Naive thymus-derived CD4-positive, alpha-beta T cell (primary cell): ENCODE measurements at regions of chr12 and their contacts with region 1.

Region 1: GRCh38 chr12:45990468-45991283 is at the start of gene SCAF11:
- DNase-seq: peak; percentile 100
- ATAC-seq: peak; percentile 92
- H3K4me3 ChIP-seq: peak within 1 kb of the TSS; percentile 94
- H3K4me3 Mint-ChIP-seq: peak within 1 kb of the TSS; percentile 91 to 99 (median 96)
- H3K27ac ChIP-seq: peak within 1 kb of the TSS; percentile 97
- H3K27ac Mint-ChIP-seq: peak within 1 kb of the TSS; percentile 99 to 100 (median 100)
- H3K4me1 ChIP-seq: peaks cover 21 to 35% of the 10 kb centered on the region in 2 donors
- H3K4me1 Mint-ChIP-seq: peaks cover 36 to 53% (median 47%) of the 10 kb centered on the region in 7 donors
- H3K27me3 ChIP-seq: no peaks in the 10 kb centered on the region
- H3K27me3 Mint-ChIP-seq: peaks cover 0 to 15% (median 0%) of the 10 kb centered on the region in 5 donors
- total RNA-seq, gene SCAF11: 144 to 194 (median 165) TPM

Region 2: GRCh38 chr12:45215419-45216229 is 775.1 kb before region 1 on chr12 and contains the start of gene ANO6:
- CTCF ChIA-PET with region 1: no interaction called
- POLR2A ChIA-PET with region 1: no interaction called
- intact Hi-C with region 1: loop called (anchors 2 to 5 kb)
- DNase-seq: peak; percentile 58 to 85 (median 71)
- ATAC-seq: peak; percentile 86
- H3K4me3 ChIP-seq: peak within 1 kb of the TSS; percentile 83
- H3K4me3 Mint-ChIP-seq: peak within 1 kb of the TSS; percentile 90 to 99 (median 97)
- H3K27ac ChIP-seq: peak within 1 kb of the TSS; percentile 69
- H3K27ac Mint-ChIP-seq: peak within 1 kb of the TSS; percentile 83 to 96 (median 95)
- H3K4me1 ChIP-seq: peaks cover 17% of the 10 kb centered on the region in 2 donors
- H3K4me1 Mint-ChIP-seq: peaks cover 26 to 70% (median 59%) of the 10 kb centered on the region in 7 donors
- H3K27me3 ChIP-seq: no peaks in the 10 kb centered on the region
- H3K27me3 Mint-ChIP-seq: no peaks in the 10 kb centered on the region
- total RNA-seq, gene ANO6: 15.1 to 29.7 (median 25.3) TPM

Region 3: GRCh38 chr12:45966486-45966885 is 24.2 kb before region 1 on chr12:
- CTCF ChIA-PET with region 1: no interaction called
- POLR2A ChIA-PET with region 1: no interaction called
- intact Hi-C with region 1: no loop called
- DNase-seq: no peak
- ATAC-seq: no peak
- H3K4me3 ChIP-seq: no peak overlapping the region
- H3K4me3 Mint-ChIP-seq: no peak overlapping the region
- H3K27ac ChIP-seq: no peak overlapping the region
- H3K27ac Mint-ChIP-seq: no peak overlapping the region
- H3K4me1 ChIP-seq: peaks cover 0 to 6% of the 10 kb centered on the region in 2 donors
- H3K4me1 Mint-ChIP-seq: peaks cover 36 to 88% (median 76%) of the 10 kb centered on the region in 7 donors
- H3K27me3 ChIP-seq: no peaks in the 10 kb centered on the region
- H3K27me3 Mint-ChIP-seq: no peaks in the 10 kb centered on the region

Region 4: GRCh38 chr12:46005151-46005797 is 14.6 kb after region 1 on chr12:
- CTCF ChIA-PET with region 1: interaction called, 4 read pairs
- POLR2A ChIA-PET with region 1: interaction called, 6 read pairs
- intact Hi-C with region 1: loop called in 1 of 2 experiments (anchors 1 kb)
- DNase-seq: peak in 2 of 9 donors; percentile 13 to 19
- ATAC-seq: no peak
- H3K4me3 ChIP-seq: no peak overlapping the region
- H3K4me3 Mint-ChIP-seq: no peak overlapping the region
- H3K27ac ChIP-seq: no peak overlapping the region
- H3K27ac Mint-ChIP-seq: peak overlapping the region in 1 of 9 donors; percentile 47
- H3K4me1 ChIP-seq: no peaks in the 10 kb centered on the region
- H3K4me1 Mint-ChIP-seq: no peaks in the 10 kb centered on the region
- H3K27me3 ChIP-seq: no peaks in the 10 kb centered on the region
- H3K27me3 Mint-ChIP-seq: peaks cover 0 to 13% (median 0%) of the 10 kb centered on the region in 5 donors

Region 5: GRCh38 chr12:46089407-46090157 is 98.9 kb after region 1 on chr12:
- CTCF ChIA-PET with region 1: no interaction called
- POLR2A ChIA-PET with region 1: no interaction called
- intact Hi-C with region 1: no loop called
- DNase-seq: no peak
- ATAC-seq: no peak
- H3K4me3 ChIP-seq: no peak overlapping the region
- H3K4me3 Mint-ChIP-seq: no peak overlapping the region
- H3K27ac ChIP-seq: no peak overlapping the region
- H3K27ac Mint-ChIP-seq: no peak overlapping the region
- H3K4me1 ChIP-seq: no peaks in the 10 kb centered on the region
- H3K4me1 Mint-ChIP-seq: no peaks in the 10 kb centered on the region
- H3K27me3 ChIP-seq: peaks cover 3% of the 10 kb centered on the region in 2 donors
- H3K27me3 Mint-ChIP-seq: peaks cover 2 to 28% (median 23%) of the 10 kb centered on the region in 5 donors

Region 6: DNA sequence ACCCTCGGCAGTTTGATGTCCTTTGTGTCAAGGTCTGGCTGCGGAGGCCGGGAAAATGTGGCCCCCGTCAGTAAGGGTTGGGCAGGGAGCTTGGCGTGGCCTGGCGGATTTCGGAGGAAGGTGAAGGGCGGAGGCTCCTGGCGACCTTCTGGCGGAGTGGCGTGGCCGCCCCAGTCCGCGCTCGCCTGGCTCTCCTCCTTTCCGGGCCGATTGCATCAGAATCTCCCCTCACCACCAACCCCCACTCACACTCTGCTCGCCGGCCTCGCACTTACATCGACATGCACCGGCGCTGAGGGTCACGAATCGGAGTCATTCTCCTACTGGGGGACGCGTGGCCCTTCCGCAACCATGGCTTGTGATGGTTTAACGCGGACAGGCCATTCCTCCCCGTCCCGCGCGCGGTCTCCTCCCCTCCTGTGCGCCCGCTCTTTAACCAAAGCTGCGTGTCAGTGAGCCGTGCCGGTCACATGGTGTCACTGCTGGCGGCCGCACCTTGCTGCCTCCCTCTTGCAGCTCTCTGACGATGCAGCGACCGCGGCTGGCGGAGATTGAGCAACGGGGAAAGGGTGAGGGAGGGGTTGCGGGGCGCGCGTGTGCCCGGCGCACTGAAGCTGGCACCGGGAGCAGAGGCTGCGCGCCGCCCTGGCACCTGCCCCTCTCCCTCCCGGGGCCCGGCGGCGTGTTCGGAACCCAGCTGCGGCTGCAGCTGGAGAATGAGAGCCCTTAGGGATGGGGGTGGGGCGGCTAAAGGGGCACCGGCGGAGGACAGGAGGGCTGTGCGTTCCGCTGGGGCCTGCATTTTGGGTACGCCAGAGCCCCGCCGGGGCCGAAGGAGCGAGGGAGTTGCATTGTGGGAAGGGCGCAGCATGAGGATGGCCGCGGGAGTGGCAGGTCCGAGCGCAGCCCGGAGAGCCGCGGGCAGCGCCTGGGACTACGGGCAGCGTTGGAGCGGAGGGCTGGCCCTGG is 278.2 kb after region 1 on chr12 and contains the start of gene SLC38A1:
- CTCF ChIA-PET with region 1: no interaction called
- POLR2A ChIA-PET with region 1: interaction called, 39 read pairs
- intact Hi-C with region 1: loop called (anchors 1 kb)
- DNase-seq: peak; percentile 73 to 92 (median 88)
- ATAC-seq: peak; percentile 81
- H3K4me3 ChIP-seq: peak within 1 kb of the TSS; percentile 93
- H3K4me3 Mint-ChIP-seq: no peak within 1 kb of the TSS
- H3K27ac ChIP-seq: peak within 1 kb of the TSS; percentile 98
- H3K27ac Mint-ChIP-seq: no peak within 1 kb of the TSS
- H3K4me1 ChIP-seq: peaks cover 35 to 40% of the 10 kb centered on the region in 2 donors
- H3K4me1 Mint-ChIP-seq: peaks cover 9 to 35% (median 31%) of the 10 kb centered on the region in 7 donors
- H3K27me3 ChIP-seq: no peaks in the 10 kb centered on the region
- H3K27me3 Mint-ChIP-seq: no peaks in the 10 kb centered on the region
- total RNA-seq, gene SLC38A1: 172 to 283 (median 249) TPM

Region 7: GRCh38 chr12:46523863-46524770 is 533.4 kb after region 1 on chr12:
- CTCF ChIA-PET with region 1: no interaction called
- POLR2A ChIA-PET with region 1: no interaction called
- intact Hi-C with region 1: loop called in 1 of 2 experiments (anchors 2 kb)
- DNase-seq: peak in 8 of 9 donors; percentile 53 to 76 (median 69)
- ATAC-seq: peak; percentile 95
- H3K4me3 ChIP-seq: peak overlapping the region; percentile 5
- H3K4me3 Mint-ChIP-seq: peak overlapping the region; percentile 68 to 84 (median 76)
- H3K27ac ChIP-seq: peak overlapping the region; percentile 48
- H3K27ac Mint-ChIP-seq: peak overlapping the region; percentile 83 to 97 (median 90)
- H3K4me1 ChIP-seq: peaks cover 7 to 19% of the 10 kb centered on the region in 2 donors
- H3K4me1 Mint-ChIP-seq: peaks cover 21 to 57% (median 44%) of the 10 kb centered on the region in 7 donors
- H3K27me3 ChIP-seq: no peaks in the 10 kb centered on the region
- H3K27me3 Mint-ChIP-seq: no peaks in the 10 kb centered on the region

Region 8: DNA sequence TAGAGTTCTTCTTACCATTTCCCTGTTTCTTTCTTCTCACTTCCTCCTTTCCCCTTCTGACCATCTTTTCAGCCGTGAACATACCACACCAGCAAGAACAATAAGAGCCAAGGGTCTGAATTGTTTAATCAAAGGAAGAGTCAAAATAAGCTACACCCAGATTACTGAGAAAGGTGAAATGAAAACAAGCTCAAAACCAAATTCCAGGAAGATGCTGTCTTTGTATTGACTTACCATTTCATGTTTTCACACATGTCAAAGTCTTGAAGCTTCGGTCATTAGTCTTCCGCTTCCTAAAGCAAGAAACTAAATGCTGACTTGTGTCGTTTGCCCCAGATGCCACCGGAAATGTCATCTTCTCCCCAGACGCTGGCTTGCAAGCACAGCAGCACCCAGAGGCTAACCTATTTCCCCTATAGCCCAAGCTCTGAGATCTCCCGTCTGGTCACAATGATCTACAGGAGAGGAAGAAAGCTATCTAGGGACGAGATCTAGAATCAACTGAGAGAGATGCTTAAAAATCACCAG is 1225.5 kb after region 1 on chr12:
- CTCF ChIA-PET with region 1: no interaction called
- POLR2A ChIA-PET with region 1: no interaction called
- intact Hi-C with region 1: loop called in 1 of 2 experiments (anchors 5 kb)
- DNase-seq: peak in 8 of 9 donors; percentile 56 to 82 (median 72)
- ATAC-seq: peak; percentile 81
- H3K4me3 ChIP-seq: peak overlapping the region; percentile 80
- H3K4me3 Mint-ChIP-seq: peak overlapping the region; percentile 91 to 100 (median 98)
- H3K27ac ChIP-seq: peak overlapping the region; percentile 76
- H3K27ac Mint-ChIP-seq: peak overlapping the region; percentile 91 to 98 (median 96)
- H3K4me1 ChIP-seq: peaks cover 9 to 14% of the 10 kb centered on the region in 2 donors
- H3K4me1 Mint-ChIP-seq: peaks cover 6 to 52% (median 26%) of the 10 kb centered on the region in 7 donors
- H3K27me3 ChIP-seq: no peaks in the 10 kb centered on the region
- H3K27me3 Mint-ChIP-seq: peaks cover 0 to 4% (median 0%) of the 10 kb centered on the region in 5 donors

Region 9: GRCh38 chr12:47963340-47964040 is 1972.8 kb after region 1 on chr12 and contains the start of gene TMEM106C:
- CTCF ChIA-PET with region 1: no interaction called
- POLR2A ChIA-PET with region 1: no interaction called
- intact Hi-C with region 1: loop called in 1 of 2 experiments (anchors 1 kb)
- DNase-seq: peak; percentile 88 to 94 (median 92)
- ATAC-seq: peak; percentile 99
- H3K4me3 ChIP-seq: peak within 1 kb of the TSS; percentile 90
- H3K4me3 Mint-ChIP-seq: peak within 1 kb of the TSS; percentile 92 to 100 (median 96)
- H3K27ac ChIP-seq: peak within 1 kb of the TSS; percentile 75
- H3K27ac Mint-ChIP-seq: peak within 1 kb of the TSS; percentile 86 to 94 (median 90)
- H3K4me1 ChIP-seq: peaks cover 7 to 13% of the 10 kb centered on the region in 2 donors
- H3K4me1 Mint-ChIP-seq: peaks cover 20 to 42% (median 34%) of the 10 kb centered on the region in 7 donors
- H3K27me3 ChIP-seq: no peaks in the 10 kb centered on the region
- H3K27me3 Mint-ChIP-seq: peaks cover 0 to 36% (median 6%) of the 10 kb centered on the region in 5 donors
- total RNA-seq, gene TMEM106C: 20.7 to 120 (median 34.4) TPM